ENCODE measurements at regions of chr14 and their contacts with region 1.

Region 1: DNA sequence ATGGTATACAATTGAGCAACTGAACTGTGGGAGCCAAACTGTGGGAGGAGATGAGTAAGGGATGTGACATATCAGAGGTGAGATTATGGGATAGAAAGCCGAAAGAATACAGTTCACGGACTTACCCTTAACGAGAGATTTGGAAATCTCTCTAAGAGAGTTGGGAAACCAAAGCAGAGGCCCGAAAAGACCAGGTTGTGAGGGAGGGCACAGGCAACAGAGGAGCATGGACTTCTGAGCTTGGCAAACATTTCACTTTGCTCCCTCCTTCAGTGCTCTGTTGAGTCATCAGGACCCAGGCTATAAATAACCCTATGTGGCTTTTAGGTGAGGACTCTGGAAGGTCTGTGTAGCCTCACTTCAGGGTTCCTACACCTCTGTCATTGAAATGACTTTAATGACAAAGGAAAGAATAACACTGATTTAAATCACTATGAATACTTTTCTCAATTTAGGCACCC is 120.6 kb downstream of the TGFB3 start:
- DNase-seq: no peak
- H3K4me3 ChIP-seq: no peak overlapping the region
- H3K27ac ChIP-seq: no peak overlapping the region
- H3K4me1 ChIP-seq: peaks cover 0 to 4% of the 10 kb centered on the region in 2 donors
- H3K27me3 ChIP-seq: no peaks in the 10 kb centered on the region
- CTCF ChIP-seq: no peak

Region 2: GRCh38 chr14:75800792-75801191 is 60.4 kb before region 1 on chr14:
- intact Hi-C with region 1: loop called (anchors 10 kb)
- DNase-seq: no peak
- H3K4me3 ChIP-seq: no peak overlapping the region
- H3K27ac ChIP-seq: no peak overlapping the region
- H3K4me1 ChIP-seq: peaks cover 0 to 5% of the 10 kb centered on the region in 2 donors
- H3K27me3 ChIP-seq: no peaks in the 10 kb centered on the region
- CTCF ChIP-seq: no peak

Region 3: DNA sequence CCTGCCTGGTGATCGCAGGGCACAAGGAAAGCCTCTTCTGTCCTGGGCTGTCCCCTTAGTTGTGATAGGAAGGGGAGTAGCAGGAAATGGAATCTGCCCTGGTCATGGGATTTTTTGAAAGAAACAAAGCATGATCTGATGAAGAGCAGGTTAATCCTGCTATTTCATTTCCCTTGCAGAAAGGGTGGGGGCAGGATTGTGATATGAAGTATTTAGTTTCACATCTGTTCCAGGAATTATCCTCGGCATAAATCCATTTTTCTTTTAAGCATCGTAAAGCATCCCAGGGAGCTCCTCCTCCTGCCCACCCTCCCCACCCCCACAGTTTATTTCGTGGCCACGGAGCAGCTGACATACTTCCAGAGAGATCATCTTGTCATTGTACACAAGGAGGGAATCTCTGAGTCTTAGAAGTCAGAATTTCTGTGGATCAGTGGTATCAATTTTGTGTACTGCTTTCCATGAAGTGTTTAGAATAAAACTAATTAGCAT is 67.5 kb after region 1 on chr14:
- intact Hi-C with region 1: no loop called
- DNase-seq: no peak
- H3K4me3 ChIP-seq: no peak overlapping the region
- H3K27ac ChIP-seq: no peak overlapping the region
- H3K4me1 ChIP-seq: no peaks in the 10 kb centered on the region
- H3K27me3 ChIP-seq: no peaks in the 10 kb centered on the region
- CTCF ChIP-seq: no peak

Region 4: GRCh38 chr14:76446921-76447320 is 585.7 kb after region 1 on chr14:
- intact Hi-C with region 1: no loop called
- DNase-seq: no peak
- H3K4me3 ChIP-seq: no peak overlapping the region
- H3K27ac ChIP-seq: no peak overlapping the region
- H3K4me1 ChIP-seq: no peaks in the 10 kb centered on the region
- H3K27me3 ChIP-seq: no peaks in the 10 kb centered on the region
- CTCF ChIP-seq: no peak